Mammary epithelial cell (primary cell): ENCODE measurements at regions of chr1 and their contacts with region 1.

Region 1: GRCh38 chr1:202009326-202010179 is 834 bp upstream of the ELF3 start:
- DNase-seq: peak; percentile 80
- H3K4me3 ChIP-seq: no peak overlapping the region
- H3K27ac ChIP-seq: peak overlapping the region; percentile 39
- H3K4me1 ChIP-seq: peaks cover 43% of the 10 kb centered on the region
- H3K27me3 ChIP-seq: no peaks in the 10 kb centered on the region
- CTCF ChIP-seq: peak; percentile 87 to 90

Region 2: DNA sequence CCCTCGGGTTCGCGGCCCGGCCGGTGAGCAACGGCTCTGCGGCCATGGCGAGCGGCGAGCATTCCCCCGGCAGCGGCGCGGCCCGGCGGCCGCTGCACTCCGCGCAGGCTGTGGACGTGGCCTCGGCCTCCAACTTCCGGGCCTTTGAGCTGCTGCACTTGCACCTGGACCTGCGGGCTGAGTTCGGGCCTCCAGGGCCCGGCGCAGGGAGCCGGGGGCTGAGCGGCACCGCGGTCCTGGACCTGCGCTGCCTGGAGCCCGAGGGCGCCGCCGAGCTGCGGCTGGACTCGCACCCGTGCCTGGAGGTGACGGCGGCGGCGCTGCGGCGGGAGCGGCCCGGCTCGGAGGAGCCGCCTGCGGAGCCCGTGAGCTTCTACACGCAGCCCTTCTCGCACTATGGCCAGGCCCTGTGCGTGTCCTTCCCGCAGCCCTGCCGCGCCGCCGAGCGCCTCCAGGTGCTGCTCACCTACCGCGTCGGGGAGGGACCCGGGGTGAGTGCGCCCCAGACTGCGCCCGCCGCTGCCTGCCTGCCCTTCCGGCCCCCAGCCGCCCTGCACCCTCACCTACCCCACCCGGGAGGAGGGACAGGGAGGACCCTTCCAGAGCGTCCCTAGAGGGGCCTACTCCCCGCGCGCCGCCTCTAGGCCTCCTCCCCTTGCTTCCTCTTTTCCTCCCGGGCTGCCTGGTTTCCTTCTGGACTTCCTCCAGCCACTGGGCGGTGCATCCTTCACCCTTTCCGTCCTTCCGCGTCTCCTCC is 26.8 kb before region 1 on chr1 and contains the start of gene RNPEP:
- CTCF ChIA-PET with region 1: no interaction called
- dilution Hi-C with region 1: no loop called
- in situ Hi-C with region 1: no loop called
- intact Hi-C with region 1: loop called (anchors 2 kb)
- DNase-seq: peak; percentile 77
- H3K4me3 ChIP-seq: peak within 1 kb of the TSS; percentile 85 to 94 (median 89)
- H3K27ac ChIP-seq: peak within 1 kb of the TSS; percentile 57
- H3K4me1 ChIP-seq: peaks cover 41% of the 10 kb centered on the region
- H3K27me3 ChIP-seq: no peaks in the 10 kb centered on the region
- CTCF ChIP-seq: peak; percentile 3 to 32
- total RNA-seq, gene RNPEP: 68.8 to 94.0 TPM

Region 3: GRCh38 chr1:202029171-202029665 is 19.7 kb after region 1 on chr1:
- CTCF ChIA-PET with region 1: no interaction called
- dilution Hi-C with region 1: no loop called
- in situ Hi-C with region 1: no loop called
- intact Hi-C with region 1: loop called (anchors 2 kb)
- DNase-seq: peak; percentile 96
- H3K4me3 ChIP-seq: no peak overlapping the region
- H3K27ac ChIP-seq: peak overlapping the region; percentile 87
- H3K4me1 ChIP-seq: peaks cover 12% of the 10 kb centered on the region
- H3K27me3 ChIP-seq: no peaks in the 10 kb centered on the region
- CTCF ChIP-seq: no peak

Region 4: GRCh38 chr1:202122639-202123335 is 113.2 kb after region 1 on chr1 and contains the start of gene GPR37L1:
- CTCF ChIA-PET with region 1: no interaction called
- dilution Hi-C with region 1: no loop called
- in situ Hi-C with region 1: loop called (anchors 5 kb)
- intact Hi-C with region 1: loop called (anchors 1 kb)
- DNase-seq: no peak
- H3K4me3 ChIP-seq: no peak within 1 kb of the TSS
- H3K27ac ChIP-seq: no peak within 1 kb of the TSS
- H3K4me1 ChIP-seq: no peaks in the 10 kb centered on the region
- H3K27me3 ChIP-seq: no peaks in the 10 kb centered on the region
- CTCF ChIP-seq: peak in 1 of 2 donors; percentile 26
- total RNA-seq, gene GPR37L1: not detected

Region 5: DNA sequence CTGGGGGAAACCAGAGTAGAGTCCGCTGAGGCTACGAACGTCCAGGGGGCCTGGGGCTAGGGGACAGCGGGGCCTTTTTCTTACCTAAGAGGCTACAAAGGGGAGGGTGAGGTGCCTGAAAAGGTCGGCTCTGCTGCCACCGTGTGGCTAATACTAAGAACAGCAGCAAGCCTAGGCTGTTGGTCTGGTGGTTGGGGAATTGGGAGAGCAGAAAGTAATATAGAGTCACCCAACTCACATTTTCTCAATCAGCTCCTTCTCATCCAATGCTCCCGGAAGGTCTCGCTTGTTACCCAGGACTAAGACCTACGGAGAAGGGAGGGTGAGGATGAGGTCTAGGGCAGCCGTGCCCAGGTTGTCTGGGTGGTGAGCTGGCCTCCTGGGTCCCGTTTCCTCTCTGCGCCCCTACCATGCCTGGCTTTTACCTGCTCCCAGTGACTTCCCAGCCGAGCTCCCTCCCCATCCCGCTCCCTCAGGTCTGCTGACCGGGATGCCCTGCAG is 125.7 kb after region 1 on chr1:
- CTCF ChIA-PET with region 1: no interaction called
- dilution Hi-C with region 1: no loop called
- in situ Hi-C with region 1: no loop called
- intact Hi-C with region 1: loop called (anchors 1 kb)
- DNase-seq: peak; percentile 39
- H3K4me3 ChIP-seq: no peak overlapping the region
- H3K27ac ChIP-seq: no peak overlapping the region
- H3K4me1 ChIP-seq: peaks cover 16% of the 10 kb centered on the region
- H3K27me3 ChIP-seq: no peaks in the 10 kb centered on the region
- CTCF ChIP-seq: peak; percentile 83 to 89